Mucosa of descending colon (tissue), 3 donors: ENCODE measurements at regions of chr7 and their contacts with region 1.

Region 1: GRCh38 chr7:22488643-22489462 is 11.1 kb downstream of the STEAP1B start:
- DNase-seq: peak in 2 of 3 donors; percentile 59 to 87
- ATAC-seq: peak; percentile 96
- H3K4me3 ChIP-seq: no peak overlapping the region
- H3K4me1 ChIP-seq: no peaks in the 10 kb centered on the region
- CTCF ChIP-seq: peak; percentile 60

Region 2: GRCh38 chr7:22110227-22110839 is 378.5 kb before region 1 on chr7:
- intact Hi-C with region 1: loop called (anchors 5 kb)
- DNase-seq: peak in 1 of 3 donors; percentile 80
- ATAC-seq: peak; percentile 72
- H3K4me3 ChIP-seq: no peak overlapping the region
- H3K4me1 ChIP-seq: no peaks in the 10 kb centered on the region
- CTCF ChIP-seq: peak; percentile 41

Region 3: DNA sequence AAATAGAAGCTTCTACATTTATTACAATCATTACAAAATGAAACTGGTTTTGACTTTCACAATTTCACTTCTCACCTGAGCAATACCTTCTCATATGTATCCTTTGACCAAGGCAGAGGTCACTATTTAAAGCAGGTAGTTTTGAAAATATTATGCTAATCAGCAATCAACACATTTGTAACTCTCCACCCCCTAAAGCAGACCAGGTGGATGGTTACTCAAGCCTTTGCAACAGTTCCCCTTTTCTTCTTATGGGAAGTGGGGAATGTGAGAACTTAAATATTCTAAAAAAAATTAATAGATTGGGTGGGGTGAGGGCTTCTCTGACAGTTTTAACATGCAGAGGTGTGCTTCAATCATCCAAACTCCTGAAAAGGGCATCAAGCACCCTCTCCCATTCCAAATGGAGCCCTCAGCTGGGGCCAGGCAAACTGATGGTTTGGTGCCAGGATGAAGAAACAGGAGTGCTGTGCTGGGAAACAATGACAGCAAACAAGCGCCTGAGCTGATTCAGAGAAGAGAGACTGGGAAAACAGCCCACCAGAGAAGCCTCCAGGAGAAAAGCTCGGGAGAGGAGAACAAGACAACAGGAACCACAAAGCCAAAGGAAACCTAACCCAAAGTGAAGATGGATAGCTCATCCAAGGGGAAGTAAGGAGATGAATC is 149.0 kb before region 1 on chr7:
- intact Hi-C with region 1: no loop called
- DNase-seq: no peak
- ATAC-seq: no peak
- H3K4me3 ChIP-seq: no peak overlapping the region
- H3K4me1 ChIP-seq: peaks cover 11% of the 10 kb centered on the region
- CTCF ChIP-seq: no peak